ENCODE measurements at regions of chr9 and their contacts with region 1.

Region 1: DNA sequence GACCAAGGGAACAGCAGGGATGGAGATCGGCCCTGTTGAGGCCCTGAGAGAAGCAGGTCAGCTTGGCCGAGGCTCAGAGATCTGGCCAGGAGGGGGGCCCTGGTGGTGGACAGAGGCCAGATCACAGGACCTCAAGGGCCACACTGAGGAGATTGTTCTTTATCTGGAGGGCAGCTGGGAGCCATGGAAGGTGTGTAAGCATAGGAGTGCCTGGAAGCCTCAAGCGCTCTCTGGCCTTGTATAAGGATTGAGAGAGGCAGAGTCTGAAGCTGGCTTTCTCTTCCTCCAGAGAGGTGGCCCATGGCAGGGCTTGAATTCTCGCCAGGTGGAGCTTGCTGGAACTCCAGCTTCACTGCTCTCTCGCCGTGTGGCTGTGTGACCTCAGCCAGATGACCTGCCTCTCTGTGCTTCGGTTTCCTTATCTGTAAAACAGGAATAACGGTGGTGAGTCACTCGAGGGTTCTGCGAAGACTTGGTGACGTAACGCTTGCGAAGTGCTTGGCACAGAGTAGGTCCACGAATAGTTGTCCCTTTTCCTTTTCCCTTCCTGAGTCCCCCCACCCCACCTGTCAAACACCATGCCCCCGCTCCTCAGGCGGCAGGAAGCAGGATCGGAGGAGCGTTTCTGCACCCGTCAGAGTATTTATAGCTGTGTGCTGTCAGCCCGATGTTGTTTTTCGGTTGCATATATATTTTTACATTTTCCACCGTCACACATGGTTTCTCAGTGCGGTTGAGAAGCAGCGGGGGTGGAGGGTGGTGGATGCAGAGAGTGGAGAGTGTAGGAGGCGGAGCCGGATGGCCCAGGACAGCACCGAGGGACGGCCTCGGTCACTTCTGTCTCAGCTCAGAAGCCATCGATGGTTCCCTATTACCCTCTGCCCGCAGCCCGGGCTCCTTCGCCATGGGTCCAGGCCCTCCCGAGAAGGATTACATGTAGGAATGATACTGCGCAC is 17.0 kb upstream of the CRB2 start:
- DNase-seq: peak; percentile 16 to 79 (median 43)
- ATAC-seq: peak; percentile 79
- H3K4me3 ChIP-seq: peak overlapping the region; percentile 64
- H3K4me3 Mint-ChIP-seq: peak overlapping the region; percentile 80 to 96 (median 89)
- H3K27ac ChIP-seq: peak overlapping the region; percentile 59
- H3K27ac Mint-ChIP-seq: peak overlapping the region; percentile 84 to 95 (median 90)
- H3K4me1 ChIP-seq: peaks cover 15 to 22% of the 10 kb centered on the region in 2 donors
- H3K4me1 Mint-ChIP-seq: peaks cover 19 to 45% (median 43%) of the 10 kb centered on the region in 7 donors
- H3K27me3 ChIP-seq: no peaks in the 10 kb centered on the region
- H3K27me3 Mint-ChIP-seq: no peaks in the 10 kb centered on the region

Region 2: GRCh38 chr9:123174887-123175518 is 164.0 kb before region 1 on chr9:
- CTCF ChIA-PET with region 1: no interaction called
- POLR2A ChIA-PET with region 1: no interaction called
- intact Hi-C with region 1: no loop called
- DNase-seq: no peak
- ATAC-seq: no peak
- H3K4me3 ChIP-seq: no peak overlapping the region
- H3K4me3 Mint-ChIP-seq: no peak overlapping the region
- H3K27ac ChIP-seq: no peak overlapping the region
- H3K27ac Mint-ChIP-seq: no peak overlapping the region
- H3K4me1 ChIP-seq: no peaks in the 10 kb centered on the region
- H3K4me1 Mint-ChIP-seq: peaks cover 0 to 13% (median 8%) of the 10 kb centered on the region in 7 donors
- H3K27me3 ChIP-seq: no peaks in the 10 kb centered on the region
- H3K27me3 Mint-ChIP-seq: no peaks in the 10 kb centered on the region

Region 3: DNA sequence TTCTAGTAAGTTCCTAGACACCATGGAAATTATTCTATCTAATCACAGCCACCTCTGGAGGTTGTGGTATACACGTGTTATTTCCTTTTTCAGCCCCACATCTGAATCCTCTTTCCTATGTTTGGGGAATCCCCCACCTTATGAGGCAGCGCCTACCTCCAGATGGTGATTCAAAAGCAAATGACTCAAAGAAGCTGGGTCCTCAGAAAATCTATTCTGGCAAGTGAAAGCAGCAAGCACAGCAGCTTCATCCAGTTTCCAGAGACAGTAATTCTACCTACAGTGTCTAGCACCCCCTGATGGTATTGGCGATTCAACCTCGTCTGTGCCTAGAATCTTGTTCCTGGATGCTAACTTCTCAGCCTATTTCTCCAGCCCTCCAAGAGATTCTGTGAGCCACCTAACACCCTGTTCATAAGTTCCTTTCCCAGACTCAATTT is 113.6 kb before region 1 on chr9:
- CTCF ChIA-PET with region 1: no interaction called
- POLR2A ChIA-PET with region 1: no interaction called
- intact Hi-C with region 1: loop called in 1 of 2 experiments (anchors 1 kb)
- DNase-seq: peak in 8 of 9 donors; percentile 14 to 67 (median 38)
- ATAC-seq: peak; percentile 93
- H3K4me3 ChIP-seq: no peak overlapping the region
- H3K4me3 Mint-ChIP-seq: peak overlapping the region in 3 of 10 donors; percentile 1 to 24 (median 6)
- H3K27ac ChIP-seq: no peak overlapping the region
- H3K27ac Mint-ChIP-seq: peak overlapping the region in 6 of 9 donors; percentile 2 to 48 (median 34)
- H3K4me1 ChIP-seq: peaks cover 7 to 9% of the 10 kb centered on the region in 2 donors
- H3K4me1 Mint-ChIP-seq: peaks cover 10 to 31% (median 18%) of the 10 kb centered on the region in 7 donors
- H3K27me3 ChIP-seq: no peaks in the 10 kb centered on the region
- H3K27me3 Mint-ChIP-seq: no peaks in the 10 kb centered on the region

Region 4: GRCh38 chr9:123302348-123303214 is 36.4 kb before region 1 on chr9:
- CTCF ChIA-PET with region 1: interaction called, 7 read pairs
- POLR2A ChIA-PET with region 1: interaction called, 8 read pairs
- intact Hi-C with region 1: loop called (anchors 1 to 5 kb)
- DNase-seq: peak in 7 of 9 donors; percentile 16 to 51 (median 41)
- ATAC-seq: peak; percentile 30
- H3K4me3 ChIP-seq: peak overlapping the region; percentile 21
- H3K4me3 Mint-ChIP-seq: peak overlapping the region; percentile 9 to 78 (median 68)
- H3K27ac ChIP-seq: peak overlapping the region; percentile 55
- H3K27ac Mint-ChIP-seq: peak overlapping the region; percentile 63 to 98 (median 89)
- H3K4me1 ChIP-seq: peaks cover 16 to 35% of the 10 kb centered on the region in 2 donors
- H3K4me1 Mint-ChIP-seq: peaks cover 29 to 72% (median 69%) of the 10 kb centered on the region in 7 donors
- H3K27me3 ChIP-seq: no peaks in the 10 kb centered on the region
- H3K27me3 Mint-ChIP-seq: no peaks in the 10 kb centered on the region

Region 5: GRCh38 chr9:123322273-123323195 is 16.5 kb before region 1 on chr9:
- CTCF ChIA-PET with region 1: interaction called, 3 read pairs
- POLR2A ChIA-PET with region 1: interaction called, 20 read pairs
- intact Hi-C with region 1: loop called (anchors 1 kb)
- DNase-seq: peak; percentile 33 to 90 (median 83)
- ATAC-seq: peak; percentile 88
- H3K4me3 ChIP-seq: peak overlapping the region; percentile 37
- H3K4me3 Mint-ChIP-seq: peak overlapping the region; percentile 59 to 85 (median 74)
- H3K27ac ChIP-seq: peak overlapping the region; percentile 70
- H3K27ac Mint-ChIP-seq: peak overlapping the region; percentile 83 to 99 (median 94)
- H3K4me1 ChIP-seq: peaks cover 20 to 33% of the 10 kb centered on the region in 2 donors
- H3K4me1 Mint-ChIP-seq: peaks cover 24 to 56% (median 41%) of the 10 kb centered on the region in 7 donors
- H3K27me3 ChIP-seq: no peaks in the 10 kb centered on the region
- H3K27me3 Mint-ChIP-seq: no peaks in the 10 kb centered on the region

Measured in naive thymus-derived CD4-positive, alpha-beta T cell (primary cell).